Aorta (tissue), 5 donors: ENCODE measurements at regions of chr12 and their contacts with region 1.

Region 1: GRCh38 chr12:823028-823698 is 70.8 kb downstream of the WNK1 start:
- DNase-seq: no peak
- ATAC-seq: no peak
- H3K4me3 ChIP-seq: no peak overlapping the region
- H3K27ac ChIP-seq: no peak overlapping the region
- H3K4me1 ChIP-seq: peaks cover 0 to 3% of the 10 kb centered on the region in 2 donors
- H3K27me3 ChIP-seq: no peaks in the 10 kb centered on the region

Region 2: DNA sequence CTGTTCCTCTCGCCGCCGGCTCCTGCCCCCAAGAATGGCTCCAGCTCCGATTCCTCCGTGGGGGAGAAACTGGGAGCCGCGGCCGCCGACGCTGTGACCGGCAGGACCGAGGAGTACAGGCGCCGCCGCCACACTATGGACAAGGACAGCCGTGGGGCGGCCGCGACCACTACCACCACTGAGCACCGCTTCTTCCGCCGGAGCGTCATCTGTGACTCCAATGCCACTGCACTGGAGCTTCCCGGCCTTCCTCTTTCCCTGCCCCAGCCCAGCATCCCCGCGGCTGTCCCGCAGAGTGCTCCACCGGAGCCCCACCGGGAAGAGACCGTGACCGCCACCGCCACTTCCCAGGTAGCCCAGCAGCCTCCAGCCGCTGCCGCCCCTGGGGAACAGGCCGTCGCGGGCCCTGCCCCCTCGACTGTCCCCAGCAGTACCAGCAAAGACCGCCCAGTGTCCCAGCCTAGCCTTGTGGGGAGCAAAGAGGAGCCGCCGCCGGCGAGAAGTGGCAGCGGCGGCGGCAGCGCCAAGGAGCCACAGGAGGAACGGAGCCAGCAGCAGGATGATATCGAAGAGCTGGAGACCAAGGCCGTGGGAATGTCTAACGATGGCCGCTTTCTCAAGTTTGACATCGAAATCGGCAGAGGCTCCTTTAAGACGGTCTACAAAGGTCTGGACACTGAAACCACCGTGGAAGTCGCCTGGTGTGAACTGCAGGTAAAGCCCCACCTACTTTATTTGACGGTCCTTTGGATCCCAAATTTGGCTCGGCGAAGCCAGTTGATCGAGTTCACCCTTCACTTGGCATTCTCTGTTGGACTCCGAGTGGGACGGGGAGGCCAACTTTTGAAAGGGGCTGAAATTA is 69.3 kb before region 1 on chr12:
- intact Hi-C with region 1: no loop called
- DNase-seq: peak; percentile 70 to 87
- ATAC-seq: peak; percentile 13
- H3K4me3 ChIP-seq: peak overlapping the region; percentile 86 to 94
- H3K27ac ChIP-seq: peak overlapping the region in 1 of 2 donors; percentile 94
- H3K4me1 ChIP-seq: no peaks in the 10 kb centered on the region
- H3K27me3 ChIP-seq: no peaks in the 10 kb centered on the region

Region 3: DNA sequence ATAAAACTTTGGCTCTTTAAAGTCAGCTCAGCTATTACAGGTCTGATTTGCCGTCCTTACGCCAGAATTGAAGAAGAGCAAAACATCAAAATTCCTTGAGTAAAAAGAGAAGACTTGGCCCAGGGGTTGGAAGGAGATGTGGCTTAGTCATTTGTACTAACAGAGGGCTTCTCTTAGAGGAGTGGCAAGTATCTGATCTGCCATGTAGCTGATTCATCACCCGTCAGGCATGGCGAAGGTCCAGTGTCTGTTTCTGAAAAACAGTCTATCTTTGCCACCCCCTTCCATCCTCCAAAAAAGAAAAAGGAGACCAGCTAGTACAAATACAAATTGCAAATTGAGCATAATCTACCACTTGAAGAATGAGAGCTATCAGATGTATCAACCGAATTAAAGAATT is 34.4 kb after region 1 on chr12:
- intact Hi-C with region 1: loop called in 1 of 2 experiments (anchors 5 kb)
- DNase-seq: no peak
- ATAC-seq: no peak
- H3K4me3 ChIP-seq: no peak overlapping the region
- H3K27ac ChIP-seq: peak overlapping the region in 1 of 2 donors; percentile 28
- H3K4me1 ChIP-seq: no peaks in the 10 kb centered on the region
- H3K27me3 ChIP-seq: no peaks in the 10 kb centered on the region

Region 4: DNA sequence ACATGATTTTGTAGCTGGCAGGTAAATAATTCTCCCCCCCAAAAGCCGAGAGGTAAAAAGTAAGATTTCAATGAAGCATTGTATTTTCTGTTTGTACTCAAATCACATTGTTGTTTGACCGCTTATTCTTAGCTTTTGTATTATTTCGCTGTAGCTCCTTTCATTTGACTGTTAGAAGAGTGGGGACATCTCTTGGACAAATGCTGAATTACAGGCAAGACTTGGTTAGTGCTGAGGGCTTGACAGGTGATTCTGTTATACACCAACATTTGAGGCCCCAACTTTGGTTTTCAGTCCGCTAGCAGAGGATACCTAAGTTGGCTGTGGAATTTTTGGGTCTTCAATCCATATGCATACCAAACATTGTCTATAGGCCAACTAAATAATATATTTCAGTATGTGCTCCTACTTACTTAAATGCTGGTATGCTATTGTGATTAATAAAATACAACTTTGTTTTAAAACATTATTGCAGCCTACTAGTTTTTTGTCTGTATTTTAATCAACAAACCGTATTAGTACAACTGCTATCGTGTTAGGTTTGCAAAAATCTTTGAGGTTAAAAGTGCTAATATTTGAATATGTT is 270.1 kb after region 1 on chr12:
- intact Hi-C with region 1: loop called in 1 of 2 experiments (anchors 5 kb)
- DNase-seq: no peak
- ATAC-seq: no peak
- H3K4me3 ChIP-seq: no peak overlapping the region
- H3K27ac ChIP-seq: no peak overlapping the region
- H3K4me1 ChIP-seq: peaks cover 0 to 4% of the 10 kb centered on the region in 2 donors
- H3K27me3 ChIP-seq: no peaks in the 10 kb centered on the region